Calu3 (cell line): ENCODE measurements at regions of chr3 and their contacts with region 1.

Region 1: GRCh38 chr3:144744473-144744872 is 772.9 kb downstream of the DIPK2A start:
- DNase-seq: no peak
- H3K4me3 Mint-ChIP-seq: no peak overlapping the region
- H3K27ac Mint-ChIP-seq: no peak overlapping the region
- H3K4me1 Mint-ChIP-seq: no peaks in the 10 kb centered on the region
- H3K27me3 Mint-ChIP-seq: no peaks in the 10 kb centered on the region
- CTCF ChIP-seq: no peak

Region 2: DNA sequence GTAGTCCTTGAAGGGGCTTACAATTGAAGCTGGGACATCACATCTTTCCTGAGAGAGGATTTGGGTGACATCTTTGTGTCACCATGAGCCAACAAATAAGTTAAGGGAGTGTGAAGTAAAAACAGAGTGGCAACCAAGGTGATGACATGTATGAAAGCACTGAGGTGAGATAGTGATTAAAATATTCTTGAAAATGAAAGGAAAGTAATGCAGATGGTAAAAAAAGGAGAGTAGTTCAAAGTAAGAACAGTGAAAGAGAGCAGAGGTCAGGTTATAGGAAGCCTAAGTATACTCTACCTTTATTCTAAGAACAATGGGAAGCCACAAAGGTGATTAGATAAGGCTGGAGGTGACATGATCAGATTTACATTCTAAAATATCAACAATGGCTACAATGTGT is 286.7 kb before region 1 on chr3:
- CTCF ChIA-PET with region 1: interaction called, 13 read pairs
- intact Hi-C with region 1: no loop called
- DNase-seq: no peak
- H3K4me3 Mint-ChIP-seq: no peak overlapping the region
- H3K27ac Mint-ChIP-seq: no peak overlapping the region
- H3K4me1 Mint-ChIP-seq: no peaks in the 10 kb centered on the region
- H3K27me3 Mint-ChIP-seq: no peaks in the 10 kb centered on the region
- CTCF ChIP-seq: no peak